ENCODE measurements at regions of chr17 and their contacts with region 1.

Region 1: DNA sequence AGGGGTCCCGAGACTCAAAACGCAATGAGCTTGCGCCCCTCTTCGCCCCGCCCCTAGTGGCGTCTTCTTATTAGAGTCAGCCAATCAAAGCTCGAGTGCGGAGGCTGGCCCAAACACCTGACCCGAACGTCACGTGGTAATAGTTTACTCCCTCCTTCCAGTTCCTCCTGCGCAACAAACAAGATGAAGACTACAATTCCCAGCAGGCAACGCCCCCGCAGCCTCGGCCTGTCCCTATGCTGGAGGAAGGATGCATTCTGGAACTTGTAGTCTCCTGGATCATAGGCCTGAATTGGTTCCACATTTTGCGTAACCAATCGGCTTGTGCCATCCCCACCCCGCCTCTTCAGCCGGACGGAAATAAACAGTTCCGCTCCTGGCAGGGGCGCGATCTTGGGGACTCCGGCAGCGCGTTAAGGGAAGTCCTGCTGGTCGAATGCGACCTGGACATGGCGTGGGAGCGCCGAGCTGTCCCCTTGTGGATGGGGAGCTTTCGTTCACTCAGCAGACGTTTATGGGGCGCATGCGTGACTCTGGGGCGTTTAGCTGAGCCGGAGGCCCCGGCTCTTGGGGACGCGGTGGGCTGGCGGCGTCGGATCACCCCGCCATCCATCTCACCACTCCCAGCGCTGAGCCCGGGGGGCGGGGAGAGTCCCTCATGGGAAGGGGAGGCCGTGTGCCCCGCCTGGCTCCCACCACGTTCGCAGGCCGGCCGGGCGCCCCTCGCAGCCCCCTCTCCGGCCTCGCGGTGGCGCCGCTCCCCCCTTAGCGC is at the start of gene WBP2:
- DNase-seq: peak; percentile 100
- ATAC-seq: peak; percentile 79 to 80
- H3K4me3 ChIP-seq: peak within 1 kb of the TSS; percentile 63 to 85 (median 78)
- H3K27ac ChIP-seq: peak within 1 kb of the TSS; percentile 95 to 99 (median 96)
- H3K4me1 ChIP-seq: peaks cover 39 to 40% of the 10 kb centered on the region in 2 donors
- H3K27me3 ChIP-seq: no peaks in the 10 kb centered on the region
- CTCF ChIP-seq: peak; percentile 54 to 79 (median 61)
- POLR2A ChIP-seq: peak; percentile 96 to 100
- total RNA-seq, gene WBP2: 129 to 259 (median 148) TPM

Region 2: DNA sequence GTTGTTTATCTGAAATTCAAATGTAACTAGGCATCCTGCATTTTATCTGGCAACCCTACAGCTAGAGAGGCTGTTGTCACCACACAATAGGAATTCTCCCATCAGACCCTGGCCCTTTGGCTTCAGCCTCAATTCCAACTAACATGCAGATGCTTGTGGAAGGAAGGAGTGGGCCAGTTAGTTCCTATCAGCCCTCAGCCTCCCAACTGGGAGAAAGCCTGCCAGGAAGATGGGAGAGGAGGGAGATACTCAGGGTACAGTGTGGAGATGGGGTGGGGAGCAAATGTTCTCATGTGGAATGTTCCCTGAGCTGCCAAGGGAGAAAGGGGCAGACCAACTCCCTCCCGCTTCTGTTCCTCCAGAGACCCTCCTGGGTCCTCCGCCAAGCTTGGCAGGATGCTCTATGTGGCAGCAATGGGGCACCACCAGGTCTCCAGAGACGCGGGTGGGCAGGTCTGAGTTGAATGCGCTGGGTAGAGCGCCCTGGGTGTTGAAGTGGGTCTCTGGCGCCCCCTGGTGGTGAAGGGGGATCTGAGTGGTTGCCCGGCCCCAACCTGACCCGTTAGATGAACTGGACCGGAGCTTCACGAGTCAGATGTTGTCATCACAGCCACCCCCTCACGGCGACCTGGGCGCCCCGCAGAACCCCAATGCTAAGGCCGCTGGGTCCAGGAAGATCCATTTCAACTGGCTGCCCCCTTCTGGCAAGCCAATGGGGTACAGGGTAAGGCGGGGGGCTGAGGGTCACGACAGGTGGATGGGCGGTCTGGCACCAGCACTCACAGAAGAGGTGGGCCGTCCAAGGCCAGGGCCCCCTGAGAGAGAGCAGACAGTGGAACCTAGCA is 105.7 kb before region 1 on chr17:
- in situ Hi-C with region 1: no loop called
- intact Hi-C with region 1: no loop called
- DNase-seq: peak; percentile 66 to 79
- ATAC-seq: peak; percentile 64 to 67
- H3K4me3 ChIP-seq: no peak overlapping the region
- H3K27ac ChIP-seq: no peak overlapping the region
- H3K4me1 ChIP-seq: peaks cover 16 to 19% of the 10 kb centered on the region in 2 donors
- H3K27me3 ChIP-seq: no peaks in the 10 kb centered on the region
- CTCF ChIP-seq: peak; percentile 92 to 97 (median 97)
- POLR2A ChIP-seq: no peak

Region 3: DNA sequence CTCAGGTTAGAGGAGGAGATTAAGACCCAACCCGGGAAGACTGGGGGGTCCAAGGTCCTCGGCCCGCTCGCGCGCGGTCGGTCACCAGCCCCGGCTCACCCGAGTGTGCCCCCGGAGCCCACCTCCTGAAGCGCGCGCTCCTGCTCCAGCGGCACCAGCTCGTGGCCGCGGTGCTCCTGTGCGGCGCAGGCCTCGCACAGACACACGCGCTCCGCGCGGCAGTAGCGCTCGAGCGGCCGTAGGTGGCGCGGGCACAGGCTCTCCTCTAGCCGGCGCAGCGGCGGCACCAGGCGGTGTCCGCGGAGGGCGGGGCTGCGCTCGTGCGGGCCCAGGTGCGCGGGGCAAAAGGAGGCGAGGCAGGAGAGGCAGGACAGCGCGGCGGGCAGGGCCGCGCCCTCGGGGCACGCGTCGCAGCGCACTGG is 22.3 kb after region 1 on chr17:
- in situ Hi-C with region 1: no loop called
- intact Hi-C with region 1: loop called (anchors 1 kb)
- DNase-seq: peak; percentile 42 to 60
- ATAC-seq: peak; percentile 53 to 59
- H3K4me3 ChIP-seq: peak overlapping the region; percentile 56 to 87 (median 70)
- H3K27ac ChIP-seq: peak overlapping the region; percentile 79 to 92 (median 86)
- H3K4me1 ChIP-seq: peaks cover 37 to 38% of the 10 kb centered on the region in 2 donors
- H3K27me3 ChIP-seq: no peaks in the 10 kb centered on the region
- CTCF ChIP-seq: peak in 4 of 5 experiments; percentile 45 to 65 (median 58)
- POLR2A ChIP-seq: no peak

Measured in gastrocnemius medialis (tissue), 4 donors.